ENCODE measurements at regions of chr11 and their contacts with region 1.

Region 1: GRCh38 chr11:18191376-18191775 is 18.7 kb downstream of the MRGPRX4 start:
- DNase-seq: no peak

Region 2: DNA sequence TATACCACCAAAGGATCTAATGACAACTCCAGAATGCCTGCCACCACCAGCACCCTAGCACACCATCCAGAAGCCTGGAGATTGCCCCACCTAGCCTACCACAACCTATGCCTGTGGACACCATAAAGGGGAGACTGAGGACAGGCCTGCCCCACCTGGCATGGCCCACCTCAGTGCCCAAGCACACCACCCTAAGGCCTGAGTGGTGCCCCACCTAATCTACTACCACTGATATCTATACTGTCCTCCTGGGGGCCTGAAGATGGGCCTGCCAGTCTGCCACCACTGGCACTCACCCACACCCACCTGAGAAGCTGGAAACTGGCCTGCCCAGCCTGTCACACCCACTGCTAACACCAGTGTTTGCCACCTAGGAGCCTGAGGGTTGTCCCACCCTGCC is 13.4 kb after region 1 on chr11:
- intact Hi-C with region 1: loop called in 1 of 2 experiments (anchors 1 kb)
- DNase-seq: no peak